Posterior cingulate gyrus (tissue), 11 donors: ENCODE measurements at regions of chr6 and their contacts with region 1.

Region 1: DNA sequence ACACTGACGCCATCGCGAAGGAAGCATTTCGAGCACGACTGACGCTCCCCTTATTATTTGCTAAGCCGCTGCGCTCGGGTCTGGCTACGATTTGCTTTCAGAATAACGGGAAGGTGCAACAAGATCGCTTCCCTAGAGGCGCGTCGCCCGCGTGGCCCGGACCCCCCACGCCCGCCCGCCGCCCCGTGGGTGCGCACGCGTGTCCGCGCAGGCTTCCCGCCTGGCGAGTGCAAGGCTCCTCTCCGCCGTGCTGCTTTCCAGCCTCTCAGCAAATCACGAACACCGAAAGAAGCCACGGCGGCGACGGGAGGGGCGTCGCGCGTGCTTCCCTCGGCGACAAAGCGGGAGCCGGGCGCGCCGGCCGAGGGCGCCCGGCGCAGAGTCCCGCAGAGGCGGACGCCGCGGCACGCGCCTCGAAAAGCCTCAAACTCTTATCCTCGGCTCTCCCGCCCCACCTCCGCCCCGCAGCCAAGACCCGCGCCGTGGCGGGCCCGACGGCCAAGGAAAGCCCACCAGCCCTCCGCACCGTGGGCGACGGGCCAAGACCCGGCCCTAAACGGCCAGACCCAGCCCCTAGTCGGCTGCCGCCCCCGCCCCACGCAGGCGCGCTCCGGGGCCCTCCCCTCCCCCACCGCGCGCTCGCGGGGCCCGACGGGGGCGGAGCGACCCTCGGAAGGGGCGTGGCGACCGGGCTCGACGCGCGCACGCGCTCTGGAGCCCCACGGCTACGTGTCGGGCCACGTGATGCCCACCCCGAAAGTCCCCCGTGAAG is 987 bp upstream of the QKI start:
- DNase-seq: peak; percentile 77 to 98 (median 84)

Region 2: GRCh38 chr6:162727309-162728182 is 686.0 kb before region 1 on chr6 and contains the starts of genes PACRG and PRKN:
- intact Hi-C with region 1: loop called (anchors 10 kb)
- DNase-seq: peak; percentile 97 to 100 (median 99)

Region 3: GRCh38 chr6:163180874-163181541 is 232.5 kb before region 1 on chr6:
- intact Hi-C with region 1: loop called (anchors 2 kb)
- DNase-seq: peak; percentile 77 to 98 (median 92)

Region 4: GRCh38 chr6:163338671-163339405 is 74.7 kb before region 1 on chr6:
- intact Hi-C with region 1: loop called (anchors 5 kb)
- DNase-seq: peak; percentile 52 to 96 (median 73)

Region 5: GRCh38 chr6:163620670-163621330 is 207.3 kb after region 1 on chr6:
- intact Hi-C with region 1: no loop called
- DNase-seq: no peak

Region 6: DNA sequence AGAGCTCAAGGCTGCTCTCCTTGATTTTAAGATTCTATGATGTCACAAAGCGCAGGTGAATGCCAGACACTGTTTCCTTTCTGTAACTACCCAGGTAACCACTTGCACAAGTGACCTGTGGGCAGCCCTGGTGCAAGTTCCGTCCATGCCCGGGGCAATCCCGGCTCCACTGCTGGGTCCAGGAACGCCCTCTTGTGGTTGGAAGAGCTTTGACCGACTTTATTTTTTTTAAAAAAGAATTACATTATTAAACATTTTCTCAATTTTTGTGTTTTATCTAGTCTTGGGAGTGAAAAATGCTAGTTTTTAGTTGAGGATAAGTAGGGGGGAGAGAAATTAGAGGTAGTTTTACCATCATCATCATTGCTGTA is 696.2 kb after region 1 on chr6:
- intact Hi-C with region 1: loop called (anchors 2 kb)
- DNase-seq: peak in 1 of 10 donors; percentile 87

Region 7: DNA sequence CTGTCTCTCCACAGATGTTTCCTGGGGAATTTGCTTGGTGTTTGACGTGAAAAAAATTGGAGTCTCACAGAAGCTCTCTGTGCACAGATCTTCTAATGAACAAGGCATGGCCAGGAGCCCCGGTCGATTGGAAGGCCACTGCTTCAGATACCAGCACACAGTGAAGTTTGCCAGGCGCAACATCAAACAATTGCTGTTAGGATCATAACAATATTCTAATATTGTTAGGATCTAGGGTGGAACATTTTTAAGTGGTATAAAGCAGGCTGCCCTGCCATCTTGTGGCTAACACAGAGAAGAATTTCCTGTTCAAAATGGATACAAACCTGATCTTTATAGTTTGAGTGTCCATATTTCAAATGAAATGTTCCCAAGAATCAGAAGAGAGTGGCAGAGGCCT is 1831.8 kb after region 1 on chr6:
- intact Hi-C with region 1: loop called (anchors 10 kb)
- DNase-seq: peak in 5 of 10 donors; percentile 10 to 87 (median 23)